CD4-positive, alpha-beta memory T cell (primary cell): ENCODE measurements at regions of chr4 and their contacts with region 1.

Region 1: DNA sequence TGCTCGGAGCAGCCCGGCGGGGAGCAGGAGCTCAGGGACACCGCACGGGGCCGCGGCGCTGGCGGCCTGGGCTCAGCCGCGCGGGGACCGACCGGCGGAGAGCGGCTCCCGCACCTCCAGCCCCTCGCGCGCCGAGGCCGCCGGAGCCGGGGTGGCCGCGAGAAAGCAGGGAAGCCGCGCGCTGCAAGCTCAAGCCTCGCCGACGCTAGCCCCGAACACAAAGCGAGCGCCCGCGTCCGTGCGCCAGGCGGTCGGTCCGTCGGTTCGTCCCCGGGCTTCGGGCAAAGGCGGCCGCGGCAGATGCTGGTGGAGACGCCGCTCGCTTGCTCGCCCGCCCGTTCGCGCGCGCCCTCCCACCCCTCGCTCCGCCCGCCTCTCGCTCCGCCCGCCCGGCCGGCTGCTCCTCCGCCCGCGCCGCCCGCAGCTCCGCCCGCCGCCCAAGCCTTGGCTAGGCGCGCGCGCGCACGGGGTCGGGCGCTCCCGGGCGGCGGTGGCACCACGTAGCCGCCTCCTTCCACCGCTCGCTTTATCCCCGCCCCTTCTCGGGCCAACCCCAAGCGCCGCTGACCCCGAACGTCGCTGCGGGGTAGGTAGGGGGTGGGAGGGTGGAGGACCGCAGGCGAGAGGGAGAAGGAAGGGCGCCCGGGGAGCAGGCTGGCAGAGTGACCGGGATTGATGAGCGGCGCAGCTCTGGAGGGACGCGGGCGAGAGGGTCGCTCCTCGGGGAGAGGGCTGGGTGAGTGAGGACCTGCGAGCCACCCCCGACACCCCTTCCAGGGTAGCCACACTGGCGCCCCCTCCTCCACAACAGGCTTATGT is at the start of gene TSPAN5:
- DNase-seq: peak; percentile 77 to 83 (median 80)
- H3K4me3 ChIP-seq: peak within 1 kb of the TSS; percentile 95 to 99
- H3K4me3 Mint-ChIP-seq: peak within 1 kb of the TSS; percentile 91 to 100 (median 96)
- H3K27ac ChIP-seq: peak within 1 kb of the TSS; percentile 60
- H3K27ac Mint-ChIP-seq: peak within 1 kb of the TSS; percentile 59 to 96 (median 92)
- H3K4me1 ChIP-seq: peaks cover 82% of the 10 kb centered on the region
- H3K4me1 Mint-ChIP-seq: peaks cover 55 to 91% (median 74%) of the 10 kb centered on the region in 4 donors
- H3K27me3 ChIP-seq: no peaks in the 10 kb centered on the region
- H3K27me3 Mint-ChIP-seq: no peaks in the 10 kb centered on the region
- total RNA-seq, gene TSPAN5: 16.8 to 17.4 TPM

Region 2: GRCh38 chr4:98260579-98261290 is 397.8 kb before region 1 on chr4:
- CTCF ChIA-PET with region 1: no interaction called
- POLR2A ChIA-PET with region 1: interaction called, 14 read pairs
- intact Hi-C with region 1: loop called (anchors 1 kb)
- DNase-seq: peak in 4 of 5 donors; percentile 83 to 90 (median 84)
- H3K4me3 ChIP-seq: peak overlapping the region; percentile 70 to 82
- H3K4me3 Mint-ChIP-seq: peak overlapping the region; percentile 93 to 95 (median 94)
- H3K27ac ChIP-seq: peak overlapping the region; percentile 86
- H3K27ac Mint-ChIP-seq: peak overlapping the region; percentile 90 to 94 (median 93)
- H3K4me1 ChIP-seq: peaks cover 32% of the 10 kb centered on the region
- H3K4me1 Mint-ChIP-seq: peaks cover 37 to 60% (median 47%) of the 10 kb centered on the region in 4 donors
- H3K27me3 ChIP-seq: no peaks in the 10 kb centered on the region
- H3K27me3 Mint-ChIP-seq: no peaks in the 10 kb centered on the region

Region 3: DNA sequence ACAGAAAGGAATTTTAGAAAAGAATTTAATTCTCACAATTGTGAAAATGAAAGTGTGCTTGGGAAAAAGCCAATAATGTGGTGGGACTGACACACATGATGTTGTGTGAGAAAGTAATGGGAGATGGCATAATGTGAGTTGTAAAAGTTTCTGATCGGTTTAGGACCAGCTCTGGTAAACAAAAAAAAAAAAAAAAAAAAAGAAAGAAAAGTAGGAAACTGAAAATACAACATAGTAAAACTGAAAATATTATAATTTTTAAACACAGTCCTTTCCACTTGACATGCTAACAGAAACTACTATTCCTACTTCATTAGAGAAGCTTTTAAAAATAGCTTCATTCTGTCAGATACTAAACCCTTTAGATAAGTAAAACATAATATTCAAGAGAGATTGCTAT is 369.1 kb before region 1 on chr4:
- CTCF ChIA-PET with region 1: no interaction called
- POLR2A ChIA-PET with region 1: no interaction called
- intact Hi-C with region 1: no loop called
- DNase-seq: peak in 1 of 5 donors; percentile 6
- H3K4me3 ChIP-seq: no peak overlapping the region
- H3K4me3 Mint-ChIP-seq: peak overlapping the region in 6 of 8 donors; percentile 31 to 65 (median 58)
- H3K27ac ChIP-seq: no peak overlapping the region
- H3K27ac Mint-ChIP-seq: peak overlapping the region; percentile 53 to 90 (median 77)
- H3K4me1 ChIP-seq: peaks cover 36% of the 10 kb centered on the region
- H3K4me1 Mint-ChIP-seq: peaks cover 35 to 62% (median 46%) of the 10 kb centered on the region in 4 donors
- H3K27me3 ChIP-seq: no peaks in the 10 kb centered on the region
- H3K27me3 Mint-ChIP-seq: no peaks in the 10 kb centered on the region

Region 4: GRCh38 chr4:98603683-98604521 is 54.6 kb before region 1 on chr4:
- CTCF ChIA-PET with region 1: no interaction called
- POLR2A ChIA-PET with region 1: interaction called, 7 read pairs
- intact Hi-C with region 1: loop called (anchors 2 kb)
- DNase-seq: peak in 2 of 5 donors; percentile 9 to 20
- H3K4me3 ChIP-seq: no peak overlapping the region
- H3K4me3 Mint-ChIP-seq: peak overlapping the region; percentile 49 to 80 (median 76)
- H3K27ac ChIP-seq: no peak overlapping the region
- H3K27ac Mint-ChIP-seq: peak overlapping the region; percentile 10 to 68 (median 49)
- H3K4me1 ChIP-seq: peaks cover 65% of the 10 kb centered on the region
- H3K4me1 Mint-ChIP-seq: peaks cover 54 to 74% (median 66%) of the 10 kb centered on the region in 4 donors
- H3K27me3 ChIP-seq: no peaks in the 10 kb centered on the region
- H3K27me3 Mint-ChIP-seq: no peaks in the 10 kb centered on the region

Region 5: DNA sequence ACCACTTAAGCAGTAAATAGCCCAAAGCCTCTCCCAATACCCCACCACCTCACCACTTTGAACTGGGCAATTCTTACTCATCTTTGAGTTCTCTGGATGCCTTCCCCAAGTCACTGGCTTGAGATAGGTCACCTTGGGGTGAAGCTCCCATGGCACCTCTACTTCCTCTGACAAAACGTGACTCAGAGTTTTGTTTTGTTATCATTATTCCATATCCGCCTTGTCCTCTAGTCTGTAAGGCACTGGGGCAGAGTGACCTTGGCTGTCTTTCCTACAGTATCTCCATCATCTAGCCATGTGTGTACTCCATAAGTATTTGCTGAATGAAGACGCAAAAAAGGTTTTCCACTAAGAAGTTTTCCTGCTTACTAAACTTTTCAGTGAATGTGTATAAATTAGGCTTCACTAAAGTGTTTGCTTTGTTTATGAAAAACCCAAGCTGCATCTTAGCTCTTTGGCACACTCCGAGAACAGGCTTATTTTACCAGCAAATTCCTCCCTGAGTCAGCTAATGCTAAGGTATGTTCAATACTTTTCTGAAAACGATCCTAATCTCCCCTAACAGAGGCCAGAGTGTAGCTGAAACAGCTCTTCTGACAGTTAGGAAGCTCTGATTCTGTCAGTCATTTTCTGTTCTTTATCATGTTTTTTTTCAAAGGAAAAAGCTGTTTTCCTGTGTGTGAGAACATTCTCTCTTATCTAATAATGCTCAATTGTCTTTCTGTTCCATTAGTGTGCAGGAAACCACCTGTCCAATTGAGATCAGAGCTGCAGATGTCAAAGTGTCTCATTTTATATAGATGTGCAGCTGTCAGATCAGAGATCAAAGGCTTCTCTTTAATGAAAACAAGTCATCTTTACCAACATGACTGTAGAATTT is 30.2 kb after region 1 on chr4:
- CTCF ChIA-PET with region 1: interaction called, 9 read pairs
- POLR2A ChIA-PET with region 1: interaction called, 33 read pairs
- intact Hi-C with region 1: loop called (anchors 1 kb)
- DNase-seq: peak; percentile 53 to 68 (median 65)
- H3K4me3 ChIP-seq: no peak overlapping the region
- H3K4me3 Mint-ChIP-seq: peak overlapping the region; percentile 22 to 86 (median 70)
- H3K27ac ChIP-seq: peak overlapping the region; percentile 1
- H3K27ac Mint-ChIP-seq: peak overlapping the region; percentile 66 to 91 (median 77)
- H3K4me1 ChIP-seq: peaks cover 32% of the 10 kb centered on the region
- H3K4me1 Mint-ChIP-seq: peaks cover 41 to 58% (median 48%) of the 10 kb centered on the region in 4 donors
- H3K27me3 ChIP-seq: no peaks in the 10 kb centered on the region
- H3K27me3 Mint-ChIP-seq: no peaks in the 10 kb centered on the region

Region 6: GRCh38 chr4:98828801-98829200 is 170.3 kb after region 1 on chr4:
- CTCF ChIA-PET with region 1: no interaction called
- POLR2A ChIA-PET with region 1: no interaction called
- intact Hi-C with region 1: loop called (anchors 10 kb)
- DNase-seq: peak in 4 of 5 donors; percentile 6 to 27 (median 22)
- H3K4me3 ChIP-seq: no peak overlapping the region
- H3K4me3 Mint-ChIP-seq: no peak overlapping the region
- H3K27ac ChIP-seq: no peak overlapping the region
- H3K27ac Mint-ChIP-seq: no peak overlapping the region
- H3K4me1 ChIP-seq: no peaks in the 10 kb centered on the region
- H3K4me1 Mint-ChIP-seq: peaks cover 0 to 3% (median 0%) of the 10 kb centered on the region in 4 donors
- H3K27me3 ChIP-seq: no peaks in the 10 kb centered on the region
- H3K27me3 Mint-ChIP-seq: no peaks in the 10 kb centered on the region